Psoas muscle (tissue), 8 donors: ENCODE measurements at regions of chr1 and their contacts with region 1.

Region 1: GRCh38 chr1:208093754-208094719 is 150.1 kb downstream of the PLXNA2 start:
- DNase-seq: peak; percentile 72 to 80
- ATAC-seq: peak; percentile 52 to 81 (median 68)
- H3K4me3 ChIP-seq: no peak overlapping the region
- H3K27ac ChIP-seq: no peak overlapping the region
- H3K4me1 ChIP-seq: peaks cover 13% of the 10 kb centered on the region
- H3K27me3 ChIP-seq: no peaks in the 10 kb centered on the region
- CTCF ChIP-seq: peak; percentile 69

Region 2: DNA sequence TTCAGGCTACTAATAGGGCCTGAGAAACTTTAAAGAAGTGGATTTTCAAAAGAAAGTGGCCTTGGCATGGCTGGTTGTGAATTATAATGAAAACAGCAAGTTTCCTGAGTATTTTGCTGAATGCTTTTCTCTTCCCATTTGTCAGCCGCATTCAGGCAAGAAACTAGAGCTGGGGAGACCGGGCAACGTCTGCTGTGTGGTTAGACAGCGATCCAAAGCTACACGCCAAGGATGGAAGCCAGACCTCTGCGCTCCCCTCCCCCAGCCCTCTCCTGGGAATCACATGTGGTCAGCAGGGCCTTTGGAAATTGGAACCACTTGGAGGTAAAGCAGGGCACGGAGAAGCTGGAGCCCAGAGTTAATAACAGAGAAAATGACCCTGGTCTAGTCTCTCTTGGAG is 69.0 kb before region 1 on chr1:
- intact Hi-C with region 1: loop called (anchors 1 to 5 kb)
- DNase-seq: peak; percentile 65 to 81
- ATAC-seq: peak; percentile 64 to 91 (median 75)
- H3K4me3 ChIP-seq: no peak overlapping the region
- H3K27ac ChIP-seq: peak overlapping the region; percentile 28
- H3K4me1 ChIP-seq: peaks cover 13% of the 10 kb centered on the region
- H3K27me3 ChIP-seq: no peaks in the 10 kb centered on the region
- CTCF ChIP-seq: no peak